ENCODE measurements at regions of chr4 and their contacts with region 1.

Region 1: GRCh38 chr4:1939664-1940509 is 68.7 kb downstream of the NSD2 start:
- DNase-seq: peak; percentile 95
- ATAC-seq: peak; percentile 85
- H3K4me3 ChIP-seq: no peak overlapping the region
- H3K27ac ChIP-seq: peak overlapping the region; percentile 95
- H3K4me1 ChIP-seq: peaks cover 19% of the 10 kb centered on the region
- H3K27me3 ChIP-seq: no peaks in the 10 kb centered on the region
- CTCF ChIP-seq: no peak
- POLR2A ChIP-seq: no peak
- RAD21 ChIP-seq: no peak

Region 2: GRCh38 chr4:1994935-1995334 is 55.0 kb after region 1 on chr4:
- CTCF ChIA-PET with region 1: interaction called, 12 read pairs
- POLR2A ChIA-PET with region 1: no interaction called
- dilution Hi-C with region 1: no loop called
- in situ Hi-C with region 1: no loop called
- intact Hi-C with region 1: no loop called
- DNase-seq: no peak
- ATAC-seq: no peak
- H3K4me3 ChIP-seq: no peak overlapping the region
- H3K27ac ChIP-seq: no peak overlapping the region
- H3K4me1 ChIP-seq: no peaks in the 10 kb centered on the region
- H3K27me3 ChIP-seq: no peaks in the 10 kb centered on the region
- CTCF ChIP-seq: no peak
- POLR2A ChIP-seq: no peak
- RAD21 ChIP-seq: no peak

Measured in IMR-90 (cell line).